HCT116 (cell line): ENCODE measurements at regions of chr12 and their contacts with region 1.

Region 1: GRCh38 chr12:54207484-54208294 is 18.9 kb upstream of the SMUG1 start:
- DNase-seq: peak; percentile 69
- ATAC-seq: peak; percentile 98
- H3K4me3 ChIP-seq: no peak overlapping the region
- H3K27ac ChIP-seq: no peak overlapping the region
- H3K4me1 ChIP-seq: peaks cover 2 to 10% of the 10 kb centered on the region in 2 experiments; a peak in 3 of 4 replicates
- H3K27me3 ChIP-seq: no peaks in the 10 kb centered on the region
- CTCF ChIP-seq: peak; percentile 92 to 98 (median 96)
- POLR2A ChIP-seq: no peak
- RAD21 ChIP-seq: peak; percentile 93

Region 2: DNA sequence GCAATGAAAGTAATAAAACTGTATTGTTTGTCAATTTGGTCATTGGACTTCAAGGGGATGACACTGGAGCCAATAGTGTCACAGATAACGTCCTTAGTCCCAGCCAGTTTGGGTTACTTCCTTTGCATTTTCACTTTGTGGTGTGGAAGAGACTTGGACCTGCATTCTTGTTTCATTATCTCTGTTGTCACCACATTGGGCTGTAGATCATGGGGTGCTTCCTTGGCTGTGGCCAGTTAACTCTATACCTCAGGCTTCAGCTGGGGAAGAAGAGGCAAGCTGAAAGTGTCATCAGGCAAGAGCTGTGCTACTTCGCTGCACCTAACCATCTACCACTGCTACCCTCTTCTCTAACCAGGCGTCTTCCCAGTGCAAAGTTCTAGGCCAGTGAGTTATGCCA is 440.8 kb before region 1 on chr12:
- CTCF ChIA-PET with region 1: no interaction called
- POLR2A ChIA-PET with region 1: no interaction called
- RAD21 ChIA-PET with region 1: no interaction called
- intact Hi-C with region 1: loop called (anchors 5 kb)
- DNase-seq: no peak
- ATAC-seq: no peak
- H3K4me3 ChIP-seq: no peak overlapping the region
- H3K27ac ChIP-seq: no peak overlapping the region
- H3K4me1 ChIP-seq: peaks cover 9 to 15% of the 10 kb centered on the region in 2 experiments
- H3K27me3 ChIP-seq: peaks cover 4% of the 10 kb centered on the region; the same call in 1 of the 2 replicates
- CTCF ChIP-seq: no peak
- POLR2A ChIP-seq: no peak
- RAD21 ChIP-seq: no peak

Region 3: GRCh38 chr12:53984901-53985709 is 222.6 kb before region 1 on chr12 and contains the start of gene HOXC10:
- CTCF ChIA-PET with region 1: interaction called, 10 read pairs
- POLR2A ChIA-PET with region 1: no interaction called
- RAD21 ChIA-PET with region 1: interaction called in 1 of 2 experiments, 3 read pairs
- intact Hi-C with region 1: no loop called
- DNase-seq: peak; percentile 93
- ATAC-seq: peak; percentile 87
- H3K4me3 ChIP-seq: peak within 1 kb of the TSS in 1 of 2 experiments; percentile 30; a peak in 2 of 4 replicates
- H3K27ac ChIP-seq: no peak within 1 kb of the TSS
- H3K4me1 ChIP-seq: peaks cover 4 to 17% of the 10 kb centered on the region in 2 experiments
- H3K27me3 ChIP-seq: no peaks in the 10 kb centered on the region
- CTCF ChIP-seq: peak; percentile 76 to 86 (median 82)
- POLR2A ChIP-seq: no peak
- RAD21 ChIP-seq: peak; percentile 87
- total RNA-seq, gene HOXC10: 3.8 TPM

Region 4: DNA sequence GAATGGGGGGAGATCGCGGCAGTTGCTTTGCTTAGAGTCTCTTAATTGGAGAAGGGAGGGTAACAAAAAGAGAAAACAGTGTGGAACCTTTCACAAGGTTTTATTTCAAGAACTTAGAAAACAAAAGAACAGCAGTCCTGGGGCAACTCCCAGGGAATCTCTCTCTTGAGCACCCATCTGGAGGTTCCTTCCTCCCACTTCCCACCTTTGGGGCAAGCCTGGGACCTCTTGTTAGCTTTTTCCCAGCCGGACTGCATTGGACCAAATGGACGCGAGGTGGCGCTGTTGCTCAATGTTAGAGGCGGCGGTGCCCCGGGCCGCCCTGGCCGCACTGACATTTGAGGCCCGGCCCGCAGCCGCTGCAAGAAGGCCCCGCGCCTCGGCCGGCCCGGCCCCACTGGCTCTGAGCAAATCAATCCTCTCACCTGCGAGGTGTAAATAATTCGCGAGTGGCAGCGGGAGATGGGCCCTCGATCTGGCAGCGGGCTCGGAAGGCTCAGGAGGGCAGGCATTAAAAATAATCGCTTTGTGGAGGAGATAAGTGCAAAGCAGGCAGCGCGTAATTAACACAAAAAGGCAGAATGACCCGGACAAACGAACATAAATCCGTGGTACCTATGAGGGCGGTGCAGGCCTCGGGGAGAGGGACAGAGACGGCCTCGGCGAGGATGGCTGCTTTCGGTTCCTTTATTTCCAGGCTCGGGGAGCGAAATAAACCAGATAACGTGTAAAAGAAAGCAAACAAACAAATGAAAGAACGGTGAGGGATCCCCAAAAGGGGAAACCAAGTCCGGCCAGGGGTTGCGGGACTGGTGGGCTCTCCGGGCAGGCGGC is 201.6 kb before region 1 on chr12:
- CTCF ChIA-PET with region 1: interaction called, 68 read pairs
- POLR2A ChIA-PET with region 1: interaction called, 3 read pairs
- RAD21 ChIA-PET with region 1: interaction called, 3 to 6 read pairs
- intact Hi-C with region 1: loop called (anchors 1 kb)
- DNase-seq: no peak
- ATAC-seq: peak; percentile 94
- H3K4me3 ChIP-seq: no peak overlapping the region
- H3K27ac ChIP-seq: no peak overlapping the region
- H3K4me1 ChIP-seq: peaks cover 2 to 12% of the 10 kb centered on the region in 2 experiments
- H3K27me3 ChIP-seq: no peaks in the 10 kb centered on the region
- CTCF ChIP-seq: peak; percentile 80 to 97 (median 93)
- POLR2A ChIP-seq: no peak
- RAD21 ChIP-seq: peak; percentile 98

Region 5: GRCh38 chr12:54017878-54018467 is 189.7 kb before region 1 on chr12:
- CTCF ChIA-PET with region 1: interaction called, 17 read pairs
- POLR2A ChIA-PET with region 1: no interaction called
- RAD21 ChIA-PET with region 1: interaction called, 5 to 7 read pairs
- intact Hi-C with region 1: no loop called
- DNase-seq: peak; percentile 84
- ATAC-seq: peak; percentile 80
- H3K4me3 ChIP-seq: peak overlapping the region; percentile 76 to 88
- H3K27ac ChIP-seq: peak overlapping the region; percentile 94
- H3K4me1 ChIP-seq: peaks cover 24 to 44% of the 10 kb centered on the region in 2 experiments
- H3K27me3 ChIP-seq: no peaks in the 10 kb centered on the region
- CTCF ChIP-seq: no peak
- POLR2A ChIP-seq: peak; percentile 56
- RAD21 ChIP-seq: no peak

Region 6: GRCh38 chr12:54032627-54033100 is 175.0 kb before region 1 on chr12 and contains the start of gene HOXC5:
- CTCF ChIA-PET with region 1: interaction called, 18 read pairs
- POLR2A ChIA-PET with region 1: interaction called, 3 read pairs
- RAD21 ChIA-PET with region 1: interaction called in 1 of 2 experiments, 6 read pairs
- intact Hi-C with region 1: no loop called
- DNase-seq: peak; percentile 54
- ATAC-seq: peak; percentile 53
- H3K4me3 ChIP-seq: peak within 1 kb of the TSS; percentile 55 to 77
- H3K27ac ChIP-seq: peak within 1 kb of the TSS; percentile 35
- H3K4me1 ChIP-seq: peaks cover 7 to 29% of the 10 kb centered on the region in 2 experiments
- H3K27me3 ChIP-seq: no peaks in the 10 kb centered on the region
- CTCF ChIP-seq: peak; percentile 88 to 98 (median 94)
- POLR2A ChIP-seq: no peak
- RAD21 ChIP-seq: peak; percentile 88
- total RNA-seq, gene HOXC5: 1.1 TPM

Region 7: DNA sequence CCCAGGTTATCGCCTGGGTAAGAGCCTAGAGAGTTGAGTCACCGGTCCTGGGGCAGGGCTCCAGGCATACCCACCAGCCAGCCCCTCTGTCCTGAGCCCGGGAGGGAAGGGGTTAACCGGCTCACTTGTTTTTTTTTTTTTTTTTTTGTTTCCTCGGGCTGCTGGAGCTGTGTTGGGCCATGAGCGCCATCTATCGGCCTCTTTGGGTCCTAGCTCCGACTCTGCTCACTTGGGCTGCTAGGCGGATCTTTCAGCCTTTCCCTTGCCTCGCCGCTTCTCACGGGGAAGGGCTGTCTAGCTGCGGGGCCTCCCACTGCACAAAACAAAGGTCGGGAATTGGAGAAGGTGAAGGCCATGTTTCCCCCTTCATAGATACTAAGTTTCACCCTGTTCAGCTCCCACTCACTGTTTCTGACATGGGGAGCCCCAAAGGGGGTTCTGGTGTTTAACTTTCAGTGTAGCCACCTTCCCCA is 16.1 kb before region 1 on chr12:
- CTCF ChIA-PET with region 1: interaction called, 14 read pairs
- POLR2A ChIA-PET with region 1: no interaction called
- RAD21 ChIA-PET with region 1: no interaction called
- intact Hi-C with region 1: no loop called
- DNase-seq: peak; percentile 77
- ATAC-seq: peak; percentile 71
- H3K4me3 ChIP-seq: no peak overlapping the region
- H3K27ac ChIP-seq: no peak overlapping the region
- H3K4me1 ChIP-seq: peaks cover 5 to 33% of the 10 kb centered on the region in 2 experiments
- H3K27me3 ChIP-seq: no peaks in the 10 kb centered on the region
- CTCF ChIP-seq: peak; percentile 80 to 92 (median 90)
- POLR2A ChIP-seq: no peak
- RAD21 ChIP-seq: peak; percentile 89

Region 8: GRCh38 chr12:54279866-54280467 is 72.3 kb after region 1 on chr12 and contains the start of gene CBX5:
- CTCF ChIA-PET with region 1: no interaction called
- POLR2A ChIA-PET with region 1: no interaction called
- RAD21 ChIA-PET with region 1: no interaction called
- intact Hi-C with region 1: no loop called
- DNase-seq: peak; percentile 98
- ATAC-seq: peak; percentile 58
- H3K4me3 ChIP-seq: peak within 1 kb of the TSS; percentile 81 to 96
- H3K27ac ChIP-seq: peak within 1 kb of the TSS; percentile 93
- H3K4me1 ChIP-seq: peaks cover 15 to 44% of the 10 kb centered on the region in 2 experiments
- H3K27me3 ChIP-seq: no peaks in the 10 kb centered on the region
- CTCF ChIP-seq: no peak
- POLR2A ChIP-seq: no peak
- RAD21 ChIP-seq: no peak
- total RNA-seq, gene CBX5: 72.3 TPM